Activated CD8-positive, alpha-beta T cell treated with anti-CD3 and anti-CD28 coated beads for 36 hours (primary cell): ENCODE measurements at regions of chr2 and their contacts with region 1.

Region 1: GRCh38 chr2:101717071-101717845 is 19.8 kb downstream of the MAP4K4 start:
- DNase-seq: peak; percentile 68
- ATAC-seq: peak; percentile 28
- H3K4me3 Mint-ChIP-seq: peak overlapping the region; percentile 10
- H3K27ac Mint-ChIP-seq: peak overlapping the region; percentile 99
- H3K4me1 Mint-ChIP-seq: peaks cover 72% of the 10 kb centered on the region
- H3K27me3 Mint-ChIP-seq: no peaks in the 10 kb centered on the region
- CTCF ChIP-seq: no peak

Region 2: GRCh38 chr2:101558740-101559519 is 158.3 kb before region 1 on chr2:
- CTCF ChIA-PET with region 1: no interaction called
- POLR2A ChIA-PET with region 1: no interaction called
- intact Hi-C with region 1: no loop called
- DNase-seq: no peak
- ATAC-seq: no peak
- H3K4me3 Mint-ChIP-seq: no peak overlapping the region
- H3K27ac Mint-ChIP-seq: no peak overlapping the region
- H3K4me1 Mint-ChIP-seq: peaks cover 24% of the 10 kb centered on the region
- H3K27me3 Mint-ChIP-seq: no peaks in the 10 kb centered on the region
- CTCF ChIP-seq: no peak

Region 3: GRCh38 chr2:101623031-101623521 is 94.2 kb before region 1 on chr2:
- CTCF ChIA-PET with region 1: no interaction called
- POLR2A ChIA-PET with region 1: no interaction called
- intact Hi-C with region 1: no loop called
- DNase-seq: no peak
- ATAC-seq: peak; percentile 60
- H3K4me3 Mint-ChIP-seq: peak overlapping the region; percentile 5
- H3K27ac Mint-ChIP-seq: peak overlapping the region; percentile 53
- H3K4me1 Mint-ChIP-seq: peaks cover 28% of the 10 kb centered on the region
- H3K27me3 Mint-ChIP-seq: no peaks in the 10 kb centered on the region
- CTCF ChIP-seq: no peak

Region 4: GRCh38 chr2:101675512-101675911 is 41.7 kb before region 1 on chr2:
- CTCF ChIA-PET with region 1: no interaction called
- POLR2A ChIA-PET with region 1: no interaction called
- intact Hi-C with region 1: no loop called
- DNase-seq: no peak
- ATAC-seq: no peak
- H3K4me3 Mint-ChIP-seq: no peak overlapping the region
- H3K27ac Mint-ChIP-seq: no peak overlapping the region
- H3K4me1 Mint-ChIP-seq: peaks cover 10% of the 10 kb centered on the region
- H3K27me3 Mint-ChIP-seq: no peaks in the 10 kb centered on the region
- CTCF ChIP-seq: no peak

Region 5: GRCh38 chr2:101704046-101704466 is 13.2 kb before region 1 on chr2:
- CTCF ChIA-PET with region 1: interaction called, 5 read pairs
- POLR2A ChIA-PET with region 1: interaction called, 17 read pairs
- intact Hi-C with region 1: no loop called
- DNase-seq: no peak
- ATAC-seq: peak; percentile 6
- H3K4me3 Mint-ChIP-seq: peak overlapping the region; percentile 48
- H3K27ac Mint-ChIP-seq: peak overlapping the region; percentile 80
- H3K4me1 Mint-ChIP-seq: peaks cover 70% of the 10 kb centered on the region
- H3K27me3 Mint-ChIP-seq: no peaks in the 10 kb centered on the region
- CTCF ChIP-seq: no peak

Region 6: DNA sequence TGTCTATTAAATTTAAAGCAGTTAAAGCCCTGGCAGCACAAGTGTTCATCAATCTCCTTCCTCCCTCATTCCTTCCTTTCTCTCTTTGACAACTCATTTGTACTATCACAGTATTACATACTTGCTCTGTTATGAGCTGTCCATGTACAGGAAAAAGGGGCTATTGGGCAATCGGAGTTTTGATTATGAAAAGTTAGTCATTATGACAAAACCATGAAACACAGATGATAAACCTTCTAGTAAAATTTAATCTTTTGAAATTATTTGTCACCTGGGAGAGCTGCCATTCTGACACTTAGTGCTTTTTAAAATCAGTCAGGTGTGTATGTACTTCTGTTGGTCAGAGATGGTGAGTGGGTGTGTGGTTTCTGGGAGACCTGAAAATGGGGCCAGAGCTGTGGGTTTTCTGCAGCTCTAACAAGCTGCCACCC is 19.6 kb after region 1 on chr2:
- CTCF ChIA-PET with region 1: interaction called, 10 read pairs
- POLR2A ChIA-PET with region 1: interaction called, 16 read pairs
- intact Hi-C with region 1: no loop called
- DNase-seq: peak; percentile 72
- ATAC-seq: peak; percentile 77
- H3K4me3 Mint-ChIP-seq: no peak overlapping the region
- H3K27ac Mint-ChIP-seq: peak overlapping the region; percentile 7
- H3K4me1 Mint-ChIP-seq: peaks cover 75% of the 10 kb centered on the region
- H3K27me3 Mint-ChIP-seq: no peaks in the 10 kb centered on the region
- CTCF ChIP-seq: no peak

Region 7: DNA sequence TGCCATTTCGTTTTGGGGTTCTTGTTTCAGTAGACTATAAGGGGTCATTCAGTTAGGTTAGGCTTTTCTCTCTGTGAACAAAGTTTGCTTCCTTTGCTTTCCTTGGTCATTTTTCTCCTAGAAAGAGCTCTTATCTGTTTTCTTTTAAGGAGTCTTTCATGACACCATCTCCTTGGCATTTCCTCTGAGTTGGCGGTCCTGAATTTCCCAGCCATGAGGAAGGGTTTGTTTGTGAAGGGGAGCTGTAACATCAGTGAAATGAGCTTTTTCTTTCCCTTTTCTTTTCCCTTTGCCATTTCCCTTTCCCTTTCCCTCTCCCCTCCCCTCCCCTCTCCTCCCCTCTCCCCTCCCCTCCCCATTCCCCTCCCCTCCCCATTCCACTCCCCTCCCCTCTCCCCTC is 41.9 kb after region 1 on chr2:
- CTCF ChIA-PET with region 1: interaction called, 3 read pairs
- POLR2A ChIA-PET with region 1: interaction called, 3 read pairs
- intact Hi-C with region 1: loop called (anchors 5 kb)
- DNase-seq: no peak
- ATAC-seq: no peak
- H3K4me3 Mint-ChIP-seq: no peak overlapping the region
- H3K27ac Mint-ChIP-seq: no peak overlapping the region
- H3K4me1 Mint-ChIP-seq: peaks cover 63% of the 10 kb centered on the region
- H3K27me3 Mint-ChIP-seq: no peaks in the 10 kb centered on the region
- CTCF ChIP-seq: no peak

Region 8: GRCh38 chr2:101770726-101771125 is 53.5 kb after region 1 on chr2:
- CTCF ChIA-PET with region 1: interaction called, 11 read pairs
- POLR2A ChIA-PET with region 1: no interaction called
- intact Hi-C with region 1: no loop called
- DNase-seq: peak; percentile 49
- ATAC-seq: peak; percentile 31
- H3K4me3 Mint-ChIP-seq: no peak overlapping the region
- H3K27ac Mint-ChIP-seq: no peak overlapping the region
- H3K4me1 Mint-ChIP-seq: peaks cover 82% of the 10 kb centered on the region
- H3K27me3 Mint-ChIP-seq: no peaks in the 10 kb centered on the region
- CTCF ChIP-seq: peak; percentile 47

Region 9: GRCh38 chr2:101900375-101900774 is 183.1 kb after region 1 on chr2:
- CTCF ChIA-PET with region 1: no interaction called
- POLR2A ChIA-PET with region 1: no interaction called
- intact Hi-C with region 1: no loop called
- DNase-seq: peak; percentile 42
- ATAC-seq: peak; percentile 92
- H3K4me3 Mint-ChIP-seq: no peak overlapping the region
- H3K27ac Mint-ChIP-seq: no peak overlapping the region
- H3K4me1 Mint-ChIP-seq: peaks cover 11% of the 10 kb centered on the region
- H3K27me3 Mint-ChIP-seq: peaks cover 10% of the 10 kb centered on the region
- CTCF ChIP-seq: no peak